ENCODE measurements at regions of chr7 and their contacts with region 1.

Region 1: GRCh38 chr7:94395141-94396036 is 694 bp downstream of the COL1A2 start:
- DNase-seq: peak in 3 of 6 donors; percentile 30 to 61 (median 34)
- ATAC-seq: peak; percentile 90 to 93 (median 91)
- H3K4me3 ChIP-seq: peak overlapping the region in 2 of 4 donors; percentile 12 to 22
- H3K27ac ChIP-seq: peak overlapping the region in 3 of 4 donors; percentile 4 to 37 (median 27)
- H3K4me1 ChIP-seq: no peaks in the 10 kb centered on the region
- H3K27me3 ChIP-seq: peaks cover 0 to 5% (median 0%) of the 10 kb centered on the region in 4 donors
- CTCF ChIP-seq: peak; percentile 42 to 65 (median 58)

Region 2: DNA sequence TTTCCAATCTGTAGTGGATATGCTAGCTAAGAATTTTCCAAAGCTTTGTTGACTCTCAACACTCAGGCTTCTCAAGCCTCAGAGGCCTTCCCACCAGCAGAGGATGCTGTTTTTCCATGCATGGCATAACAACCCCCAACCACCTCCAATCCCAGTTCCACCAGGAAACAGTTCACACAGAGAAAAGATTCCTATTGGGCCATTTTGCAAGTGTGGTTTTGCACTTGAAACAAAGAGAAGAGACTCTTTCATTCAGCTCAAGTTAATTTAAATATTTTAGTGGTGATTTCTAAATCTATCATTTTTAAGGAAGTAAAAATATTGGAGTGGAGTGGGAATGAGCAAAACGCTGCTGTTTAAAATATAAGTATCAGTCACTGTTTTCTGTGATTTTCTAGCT is 106.3 kb before region 1 on chr7:
- intact Hi-C with region 1: loop called in 2 of 3 experiments (anchors 5 to 10 kb)
- DNase-seq: peak in 4 of 6 donors; percentile 32 to 74 (median 60)
- ATAC-seq: peak; percentile 94 to 100 (median 98)
- H3K4me3 ChIP-seq: no peak overlapping the region
- H3K27ac ChIP-seq: no peak overlapping the region
- H3K4me1 ChIP-seq: no peaks in the 10 kb centered on the region
- H3K27me3 ChIP-seq: no peaks in the 10 kb centered on the region
- CTCF ChIP-seq: peak; percentile 33 to 72 (median 60)

Region 3: DNA sequence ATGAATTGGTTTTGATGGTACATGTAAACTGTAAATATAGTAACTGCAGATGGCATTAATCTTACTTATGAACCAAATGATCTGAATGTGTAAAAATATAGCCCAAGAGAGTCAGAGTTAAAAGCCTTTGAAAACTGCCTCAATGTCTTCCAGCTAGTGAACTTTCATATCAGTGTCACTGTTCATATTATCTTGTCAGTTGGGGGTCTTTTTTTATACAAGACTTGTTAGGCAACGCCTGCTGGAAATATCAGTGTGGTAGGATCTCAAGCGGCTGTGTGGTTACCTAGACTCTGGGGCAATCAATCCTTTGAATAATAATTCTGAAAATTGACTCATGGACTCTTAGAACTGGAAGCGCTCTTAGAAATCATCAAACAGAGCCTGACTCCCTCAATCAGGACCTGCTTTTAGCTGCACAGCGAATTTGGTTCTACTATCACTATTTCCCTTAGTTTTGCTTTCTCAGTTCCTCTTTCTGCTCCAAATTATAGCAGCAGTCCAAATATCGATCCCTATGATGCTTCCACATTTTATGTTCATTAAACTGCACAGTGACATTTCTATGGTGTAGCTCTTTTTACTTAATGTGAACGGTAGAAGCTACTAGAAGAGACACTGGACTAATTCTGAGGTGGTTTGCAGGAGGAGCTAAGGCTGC is 100.8 kb before region 1 on chr7:
- intact Hi-C with region 1: loop called in 2 of 3 experiments (anchors 5 to 10 kb)
- DNase-seq: no peak
- ATAC-seq: no peak
- H3K4me3 ChIP-seq: no peak overlapping the region
- H3K27ac ChIP-seq: no peak overlapping the region
- H3K4me1 ChIP-seq: peaks cover 0 to 6% (median 5%) of the 10 kb centered on the region in 3 donors
- H3K27me3 ChIP-seq: no peaks in the 10 kb centered on the region
- CTCF ChIP-seq: no peak

Region 4: DNA sequence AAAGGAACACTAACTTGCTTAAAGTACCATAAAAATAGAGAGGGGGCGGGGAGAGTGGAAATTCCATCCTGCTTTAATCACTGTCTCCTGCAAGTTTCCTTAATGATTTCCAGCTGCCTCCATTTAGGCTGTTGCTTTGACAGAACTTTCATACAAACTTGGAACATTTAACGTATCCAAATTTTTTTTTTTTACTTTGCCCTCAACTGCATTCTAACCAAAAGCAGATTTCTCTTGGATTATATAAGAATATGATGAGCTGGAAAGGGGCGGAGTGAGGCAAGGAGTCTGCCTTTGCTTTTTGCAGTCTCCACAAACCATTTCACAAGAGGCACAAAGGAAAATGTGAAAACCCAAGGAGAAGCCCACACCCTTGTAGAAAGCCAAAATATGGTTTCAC is 47.2 kb before region 1 on chr7:
- intact Hi-C with region 1: no loop called
- DNase-seq: no peak
- ATAC-seq: peak in 3 of 4 donors; percentile 24 to 60 (median 46)
- H3K4me3 ChIP-seq: no peak overlapping the region
- H3K27ac ChIP-seq: no peak overlapping the region
- H3K4me1 ChIP-seq: no peaks in the 10 kb centered on the region
- H3K27me3 ChIP-seq: no peaks in the 10 kb centered on the region
- CTCF ChIP-seq: no peak

Region 5: DNA sequence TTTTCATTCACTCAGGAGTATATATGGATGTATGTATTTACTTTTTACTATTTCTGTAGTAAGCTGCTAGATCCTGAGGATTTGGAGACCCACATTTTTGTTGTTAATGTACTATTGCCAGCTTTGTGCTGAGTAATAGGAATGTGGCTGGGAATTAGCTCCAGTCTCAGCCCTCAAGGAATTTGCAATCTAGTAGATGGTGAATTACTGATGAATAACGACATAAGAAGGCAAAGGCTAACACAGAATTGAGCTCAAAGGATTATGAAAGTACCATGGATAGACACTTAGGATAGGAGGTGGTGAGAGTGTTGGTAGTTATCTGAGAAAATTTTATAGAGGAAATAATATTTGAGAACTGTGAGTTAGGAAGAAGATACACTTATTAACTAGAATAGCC is 134.1 kb after region 1 on chr7:
- intact Hi-C with region 1: no loop called
- DNase-seq: no peak
- ATAC-seq: no peak
- H3K4me3 ChIP-seq: no peak overlapping the region
- H3K27ac ChIP-seq: no peak overlapping the region
- H3K4me1 ChIP-seq: no peaks in the 10 kb centered on the region
- H3K27me3 ChIP-seq: no peaks in the 10 kb centered on the region
- CTCF ChIP-seq: no peak